ENCODE measurements at regions of chr1 and their contacts with region 1.

Region 1: GRCh38 chr1:91744953-91745639 is 140.9 kb downstream of the TGFBR3 start:
- DNase-seq: no peak
- H3K4me3 ChIP-seq: no peak overlapping the region
- H3K27ac ChIP-seq: no peak overlapping the region
- H3K4me1 ChIP-seq: peaks cover 7% of the 10 kb centered on the region
- H3K27me3 ChIP-seq: no peaks in the 10 kb centered on the region
- CTCF ChIP-seq: no peak

Region 2: GRCh38 chr1:91633438-91633837 is 111.7 kb before region 1 on chr1:
- CTCF ChIA-PET with region 1: no interaction called
- POLR2A ChIA-PET with region 1: interaction called, 11 read pairs
- intact Hi-C with region 1: no loop called
- DNase-seq: no peak
- H3K4me3 ChIP-seq: no peak overlapping the region
- H3K27ac ChIP-seq: no peak overlapping the region
- H3K4me1 ChIP-seq: peaks cover 6% of the 10 kb centered on the region; the same call in 1 of the 2 replicates
- H3K27me3 ChIP-seq: no peaks in the 10 kb centered on the region
- CTCF ChIP-seq: no peak